MCF 10A (cell line): ENCODE measurements at regions of chr4 and their contacts with region 1.

Region 1: GRCh38 chr4:124334119-124334518 is 378.4 kb downstream of the ANKRD50 start:
- DNase-seq: peak; percentile 81
- H3K4me3 Mint-ChIP-seq: peak overlapping the region; percentile 23
- H3K27ac Mint-ChIP-seq: no peak overlapping the region
- H3K4me1 Mint-ChIP-seq: peaks cover 5% of the 10 kb centered on the region
- H3K27me3 Mint-ChIP-seq: no peaks in the 10 kb centered on the region
- CTCF ChIP-seq: peak; percentile 64

Region 2: GRCh38 chr4:123922847-123923246 is 411.3 kb before region 1 on chr4:
- CTCF ChIA-PET with region 1: no interaction called
- POLR2A ChIA-PET with region 1: no interaction called
- intact Hi-C with region 1: no loop called
- DNase-seq: no peak
- H3K4me3 Mint-ChIP-seq: no peak overlapping the region
- H3K27ac Mint-ChIP-seq: no peak overlapping the region
- H3K4me1 Mint-ChIP-seq: no peaks in the 10 kb centered on the region
- H3K27me3 Mint-ChIP-seq: no peaks in the 10 kb centered on the region
- CTCF ChIP-seq: no peak

Region 3: GRCh38 chr4:124459941-124460310 is 125.8 kb after region 1 on chr4:
- CTCF ChIA-PET with region 1: no interaction called
- POLR2A ChIA-PET with region 1: no interaction called
- intact Hi-C with region 1: no loop called
- DNase-seq: no peak
- H3K4me3 Mint-ChIP-seq: no peak overlapping the region
- H3K27ac Mint-ChIP-seq: no peak overlapping the region
- H3K4me1 Mint-ChIP-seq: no peaks in the 10 kb centered on the region
- H3K27me3 Mint-ChIP-seq: no peaks in the 10 kb centered on the region
- CTCF ChIP-seq: no peak

Region 4: DNA sequence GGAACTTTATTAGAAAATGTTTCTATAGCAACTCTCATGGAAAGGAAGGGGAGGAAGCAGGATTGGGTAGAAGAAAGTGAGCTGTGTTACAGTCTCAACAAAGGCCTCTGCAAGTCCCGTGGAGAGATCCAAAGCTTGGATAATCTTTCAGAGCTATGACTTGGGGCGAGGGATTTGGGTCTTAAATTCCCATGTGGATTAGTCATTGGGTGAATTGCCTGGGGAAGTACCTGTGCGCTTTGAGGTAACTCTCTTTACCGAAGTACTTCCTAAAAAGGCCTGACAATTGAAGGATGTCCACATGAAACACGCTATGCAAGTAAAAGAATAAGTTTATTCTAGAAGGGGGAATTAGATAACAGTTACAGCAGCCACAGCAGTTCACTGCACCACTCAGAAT is 512.2 kb after region 1 on chr4:
- CTCF ChIA-PET with region 1: no interaction called
- POLR2A ChIA-PET with region 1: no interaction called
- intact Hi-C with region 1: no loop called
- DNase-seq: peak; percentile 28
- H3K4me3 Mint-ChIP-seq: no peak overlapping the region
- H3K27ac Mint-ChIP-seq: no peak overlapping the region
- H3K4me1 Mint-ChIP-seq: peaks cover 9% of the 10 kb centered on the region
- H3K27me3 Mint-ChIP-seq: no peaks in the 10 kb centered on the region
- CTCF ChIP-seq: no peak

Region 5: DNA sequence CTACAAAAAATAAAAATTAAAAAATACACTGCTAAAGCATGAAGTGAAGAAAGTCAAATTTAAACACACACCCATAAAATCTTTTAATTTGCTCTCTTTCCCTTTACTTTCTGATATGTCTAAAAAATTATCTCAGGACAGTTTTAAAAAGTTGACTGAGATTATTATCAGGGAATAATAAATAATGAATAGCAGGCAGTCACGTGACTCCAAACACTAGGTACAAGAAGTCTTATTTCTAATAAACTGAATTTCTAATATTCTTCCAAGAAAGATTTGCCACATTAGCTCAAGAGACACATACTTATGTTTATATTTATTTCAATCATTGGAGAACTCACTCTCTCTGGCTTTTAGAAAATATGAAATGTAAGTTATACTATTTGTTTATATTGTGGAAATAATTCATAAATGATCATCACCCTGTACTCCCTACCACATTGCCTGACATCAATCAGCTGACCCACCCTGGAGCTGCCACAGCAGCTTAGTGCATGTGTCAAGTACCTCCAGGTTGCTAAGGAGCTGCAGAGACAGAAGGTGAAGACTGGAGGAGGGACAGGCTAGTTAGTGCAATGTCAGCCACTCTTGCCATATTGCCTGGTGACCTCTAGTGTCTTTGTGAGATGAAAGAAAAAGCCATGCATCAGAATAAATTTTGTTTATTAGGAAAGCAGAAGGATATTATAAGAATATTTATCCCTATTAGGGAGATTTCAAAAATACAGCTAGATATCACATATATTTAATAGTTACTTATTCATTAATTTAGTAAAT is 736.6 kb after region 1 on chr4:
- CTCF ChIA-PET with region 1: no interaction called
- POLR2A ChIA-PET with region 1: no interaction called
- intact Hi-C with region 1: loop called (anchors 10 kb)
- DNase-seq: peak; percentile 10
- H3K4me3 Mint-ChIP-seq: no peak overlapping the region
- H3K27ac Mint-ChIP-seq: no peak overlapping the region
- H3K4me1 Mint-ChIP-seq: peaks cover under 1% of the 10 kb centered on the region
- H3K27me3 Mint-ChIP-seq: no peaks in the 10 kb centered on the region
- CTCF ChIP-seq: no peak